ENCODE measurements at regions of chr9 and their contacts with region 1.

Region 1: GRCh38 chr9:137715321-137715720 is 96.5 kb downstream of the EHMT1 start:
- DNase-seq: peak; percentile 39
- ATAC-seq: peak; percentile 94
- H3K4me3 Mint-ChIP-seq: peak overlapping the region; percentile 55
- H3K27ac Mint-ChIP-seq: peak overlapping the region; percentile 91
- H3K4me1 Mint-ChIP-seq: peaks cover 43% of the 10 kb centered on the region
- H3K27me3 Mint-ChIP-seq: no peaks in the 10 kb centered on the region
- CTCF ChIP-seq: no peak

Region 2: GRCh38 chr9:137682431-137682991 is 32.8 kb before region 1 on chr9:
- CTCF ChIA-PET with region 1: no interaction called
- POLR2A ChIA-PET with region 1: interaction called, 3 read pairs
- intact Hi-C with region 1: loop called (anchors 2 kb)
- DNase-seq: no peak
- ATAC-seq: peak; percentile 83
- H3K4me3 Mint-ChIP-seq: no peak overlapping the region
- H3K27ac Mint-ChIP-seq: peak overlapping the region; percentile 66
- H3K4me1 Mint-ChIP-seq: peaks cover 75% of the 10 kb centered on the region
- H3K27me3 Mint-ChIP-seq: no peaks in the 10 kb centered on the region
- CTCF ChIP-seq: no peak

Region 3: DNA sequence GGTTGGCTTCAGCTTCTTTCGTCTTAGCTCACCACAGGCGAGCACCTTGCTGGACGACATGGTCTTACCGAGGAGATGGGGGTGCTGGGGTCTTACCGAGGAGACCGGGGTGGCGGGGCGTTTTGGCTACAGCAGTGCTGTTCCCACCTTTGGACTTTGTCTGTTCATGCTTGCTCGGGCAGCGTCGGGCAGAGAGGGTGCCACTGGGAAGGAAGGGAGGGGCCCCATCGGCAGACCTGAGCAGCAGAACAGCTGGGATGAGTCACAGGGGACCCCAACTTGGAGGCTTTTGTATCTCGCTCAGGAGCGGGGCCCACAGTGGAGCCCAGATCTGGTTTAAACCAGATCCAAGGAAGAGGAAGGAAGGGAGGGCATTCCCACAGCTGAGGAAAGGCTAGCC is 56.3 kb after region 1 on chr9:
- CTCF ChIA-PET with region 1: no interaction called
- POLR2A ChIA-PET with region 1: no interaction called
- intact Hi-C with region 1: no loop called
- DNase-seq: no peak
- ATAC-seq: no peak
- H3K4me3 Mint-ChIP-seq: no peak overlapping the region
- H3K27ac Mint-ChIP-seq: no peak overlapping the region
- H3K4me1 Mint-ChIP-seq: peaks cover 14% of the 10 kb centered on the region
- H3K27me3 Mint-ChIP-seq: no peaks in the 10 kb centered on the region
- CTCF ChIP-seq: no peak

Region 4: DNA sequence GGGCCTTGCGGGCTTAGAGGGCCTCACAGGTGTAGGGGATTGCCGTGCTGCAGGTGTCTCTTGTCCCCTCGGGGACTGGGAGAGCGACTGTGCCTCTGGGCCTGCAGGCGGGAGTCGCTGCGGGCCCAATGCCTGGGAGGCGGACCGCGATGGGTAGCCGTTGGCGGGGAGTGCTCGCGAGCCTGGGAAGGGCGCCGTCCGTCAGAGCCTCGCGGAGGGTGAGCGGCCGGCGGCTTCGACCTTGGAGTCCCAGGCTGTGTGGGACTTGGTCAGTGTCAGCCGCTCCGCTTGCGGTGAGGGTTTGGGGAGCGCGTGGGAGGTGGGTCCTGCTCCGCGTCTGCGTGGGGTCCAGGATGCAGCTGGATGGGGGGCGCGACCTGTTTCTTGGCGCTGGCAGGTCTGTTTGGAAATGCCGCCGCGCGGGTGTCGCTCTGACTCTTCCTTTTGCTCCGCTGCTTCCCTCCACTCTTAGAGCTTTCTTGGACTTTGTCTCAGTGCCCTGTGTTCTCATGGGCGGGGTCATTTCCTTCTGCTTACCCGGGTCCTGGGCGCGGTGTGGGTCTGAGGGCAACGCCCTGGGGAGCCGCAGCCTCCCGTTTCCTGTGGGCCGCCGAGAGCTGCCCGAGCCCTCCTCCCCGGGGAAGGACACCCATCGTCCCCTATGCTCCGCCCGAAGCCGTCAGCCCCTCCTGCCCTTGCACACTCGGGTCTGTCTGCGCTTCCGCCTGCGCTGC is 73.4 kb after region 1 on chr9:
- CTCF ChIA-PET with region 1: no interaction called
- POLR2A ChIA-PET with region 1: no interaction called
- intact Hi-C with region 1: no loop called
- DNase-seq: no peak
- ATAC-seq: no peak
- H3K4me3 Mint-ChIP-seq: no peak overlapping the region
- H3K27ac Mint-ChIP-seq: peak overlapping the region; percentile 71
- H3K4me1 Mint-ChIP-seq: peaks cover 7% of the 10 kb centered on the region
- H3K27me3 Mint-ChIP-seq: no peaks in the 10 kb centered on the region
- CTCF ChIP-seq: no peak